ENCODE measurements at regions of chr13 and their contacts with region 1.

Region 1: DNA sequence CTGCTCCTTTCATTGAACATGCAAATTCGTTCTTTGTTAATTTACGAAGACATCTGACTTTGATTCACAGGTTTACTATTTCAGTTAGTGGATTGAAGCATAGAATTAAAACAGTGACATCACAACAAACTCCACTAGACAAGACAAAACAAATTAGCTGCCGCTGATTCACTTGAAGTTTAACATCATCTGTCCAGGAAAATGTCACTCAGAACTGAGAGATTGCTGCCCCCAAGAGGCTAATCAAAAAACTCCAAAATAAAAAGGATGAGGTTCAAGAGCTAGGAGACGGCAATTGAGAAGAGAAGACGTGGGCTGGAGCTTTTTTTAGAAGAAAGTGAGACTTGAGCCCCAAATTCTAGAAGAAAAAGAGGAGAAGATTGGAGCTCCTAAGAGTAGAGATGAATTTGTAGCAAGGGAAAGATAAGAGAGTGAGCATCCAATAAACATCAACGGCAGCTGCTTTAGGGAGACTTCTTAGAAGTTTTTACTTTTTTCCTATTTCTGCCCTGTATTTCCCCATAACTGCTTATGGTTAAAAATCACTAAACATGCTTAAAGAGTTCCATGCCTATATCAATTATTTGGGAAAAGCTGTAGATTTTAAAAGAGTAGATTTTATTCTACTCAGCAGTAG is 40.8 kb upstream of the TPP2 start:
- DNase-seq: no peak
- ATAC-seq: peak; percentile 77
- H3K4me3 Mint-ChIP-seq: no peak overlapping the region
- H3K27ac Mint-ChIP-seq: no peak overlapping the region
- H3K4me1 Mint-ChIP-seq: no peaks in the 10 kb centered on the region
- H3K27me3 Mint-ChIP-seq: no peaks in the 10 kb centered on the region
- CTCF ChIP-seq: peak; percentile 30; the same call in 1 of the 2 replicates

Region 2: GRCh38 chr13:101942038-101942437 is 614.0 kb before region 1 on chr13:
- CTCF ChIA-PET with region 1: interaction called, 11 read pairs
- POLR2A ChIA-PET with region 1: no interaction called
- DNase-seq: peak; percentile 33
- ATAC-seq: peak; percentile 89
- H3K4me3 Mint-ChIP-seq: no peak overlapping the region
- H3K27ac Mint-ChIP-seq: no peak overlapping the region
- H3K4me1 Mint-ChIP-seq: 0 out of 2 replicates have a peak, but pooled peaks cover 3% of the 10 kb centered on the region
- H3K27me3 Mint-ChIP-seq: no peaks in the 10 kb centered on the region
- CTCF ChIP-seq: 0 out of 2 replicates have a peak, but pooled peaks have one; percentile 33

Region 3: DNA sequence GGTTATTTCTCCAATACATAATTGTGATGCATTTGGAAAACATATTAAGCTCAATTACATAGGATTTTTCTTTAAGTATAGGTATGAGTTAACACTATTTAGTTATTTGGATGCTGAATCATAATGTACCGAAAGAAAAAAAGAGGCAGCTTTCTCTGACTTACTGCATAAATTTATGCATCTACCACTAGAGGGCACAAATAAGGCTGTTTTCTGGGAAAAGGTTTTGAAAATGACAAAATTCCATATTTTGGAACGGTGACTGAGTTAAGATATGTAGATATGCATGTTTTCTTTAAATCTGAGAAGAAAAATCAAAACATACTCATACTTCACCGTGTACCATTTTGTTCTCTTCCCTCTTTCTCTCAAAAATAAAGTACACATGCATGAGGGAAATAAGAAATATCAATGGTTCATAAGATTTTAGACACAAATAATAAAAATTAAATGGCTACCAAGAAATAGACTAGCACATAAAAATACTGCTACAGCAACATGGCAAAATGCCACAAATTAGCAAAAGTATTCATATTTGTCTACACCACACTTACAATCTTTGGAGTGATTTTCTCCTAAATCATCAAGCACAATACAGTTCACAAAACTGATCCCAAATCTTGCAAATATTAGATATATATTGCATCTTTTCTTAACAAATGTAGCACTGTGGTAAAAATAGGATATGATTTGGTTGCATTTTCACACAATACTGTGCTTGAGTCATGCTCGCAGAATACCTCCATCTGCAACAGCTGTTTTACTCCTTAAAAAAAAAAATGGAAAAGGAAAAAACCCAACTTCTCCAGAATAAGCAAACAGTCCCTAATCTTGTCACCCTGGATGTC is 414.2 kb before region 1 on chr13:
- CTCF ChIA-PET with region 1: interaction called, 22 read pairs
- POLR2A ChIA-PET with region 1: no interaction called
- DNase-seq: no peak
- ATAC-seq: no peak
- H3K4me3 Mint-ChIP-seq: no peak overlapping the region
- H3K27ac Mint-ChIP-seq: no peak overlapping the region
- H3K4me1 Mint-ChIP-seq: no peaks in the 10 kb centered on the region
- H3K27me3 Mint-ChIP-seq: no peaks in the 10 kb centered on the region
- CTCF ChIP-seq: peak; percentile 40; the same call in 1 of the 2 replicates

Region 4: GRCh38 chr13:102394158-102395053 is 161.6 kb before region 1 on chr13:
- CTCF ChIA-PET with region 1: interaction called, 21 read pairs
- POLR2A ChIA-PET with region 1: no interaction called
- DNase-seq: peak; percentile 97
- ATAC-seq: peak; percentile 88
- H3K4me3 Mint-ChIP-seq: peak overlapping the region; percentile 89
- H3K27ac Mint-ChIP-seq: peak overlapping the region; percentile 90
- H3K4me1 Mint-ChIP-seq: peaks cover 14% of the 10 kb centered on the region
- H3K27me3 Mint-ChIP-seq: peaks cover 19% of the 10 kb centered on the region
- CTCF ChIP-seq: no peak

Region 5: GRCh38 chr13:102460801-102461200 is 95.2 kb before region 1 on chr13:
- CTCF ChIA-PET with region 1: interaction called, 17 read pairs
- POLR2A ChIA-PET with region 1: no interaction called
- DNase-seq: no peak
- ATAC-seq: no peak
- H3K4me3 Mint-ChIP-seq: no peak overlapping the region
- H3K27ac Mint-ChIP-seq: no peak overlapping the region
- H3K4me1 Mint-ChIP-seq: no peaks in the 10 kb centered on the region; the same call in 1 of the 2 replicates
- H3K27me3 Mint-ChIP-seq: no peaks in the 10 kb centered on the region
- CTCF ChIP-seq: no peak

Region 6: GRCh38 chr13:102792396-102792795 is 236.4 kb after region 1 on chr13:
- CTCF ChIA-PET with region 1: no interaction called
- POLR2A ChIA-PET with region 1: no interaction called
- DNase-seq: no peak
- ATAC-seq: no peak
- H3K4me3 Mint-ChIP-seq: no peak overlapping the region
- H3K27ac Mint-ChIP-seq: no peak overlapping the region
- H3K4me1 Mint-ChIP-seq: peaks cover 24% of the 10 kb centered on the region
- H3K27me3 Mint-ChIP-seq: no peaks in the 10 kb centered on the region; the same call in 1 of the 2 replicates
- CTCF ChIP-seq: no peak